Sciatic nerve (tissue), 2 donors: ENCODE measurements at regions of chr2 and their contacts with region 1.

Region 1: GRCh38 chr2:175871331-175872004 is 130.6 kb downstream of the LNPK start:
- DNase-seq: no peak
- ATAC-seq: no peak

Region 2: GRCh38 chr2:175734679-175735078 is 136.8 kb before region 1 on chr2:
- intact Hi-C with region 1: no loop called
- DNase-seq: no peak
- ATAC-seq: no peak

Region 3: DNA sequence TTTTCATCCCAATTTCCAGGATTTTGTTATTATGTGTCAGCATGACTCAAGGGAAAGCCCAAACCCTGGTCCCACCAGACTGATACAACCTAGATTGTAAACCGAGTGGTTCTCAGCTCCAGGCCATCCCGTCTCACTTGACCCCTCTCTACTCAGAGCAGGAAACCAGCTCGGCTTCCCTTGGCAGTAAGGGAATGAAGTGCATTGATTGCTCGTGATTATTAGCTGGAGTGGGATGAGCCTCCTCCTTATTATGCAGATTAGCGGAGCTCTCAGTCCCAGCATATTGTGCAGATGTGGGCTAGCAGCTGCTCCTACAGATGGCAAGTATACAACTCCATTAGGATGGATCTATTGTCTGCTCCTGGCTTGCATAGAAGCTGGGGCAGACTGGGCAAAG is 37.0 kb before region 1 on chr2:
- intact Hi-C with region 1: loop called (anchors 1 kb)
- DNase-seq: no peak
- ATAC-seq: no peak

Region 4: DNA sequence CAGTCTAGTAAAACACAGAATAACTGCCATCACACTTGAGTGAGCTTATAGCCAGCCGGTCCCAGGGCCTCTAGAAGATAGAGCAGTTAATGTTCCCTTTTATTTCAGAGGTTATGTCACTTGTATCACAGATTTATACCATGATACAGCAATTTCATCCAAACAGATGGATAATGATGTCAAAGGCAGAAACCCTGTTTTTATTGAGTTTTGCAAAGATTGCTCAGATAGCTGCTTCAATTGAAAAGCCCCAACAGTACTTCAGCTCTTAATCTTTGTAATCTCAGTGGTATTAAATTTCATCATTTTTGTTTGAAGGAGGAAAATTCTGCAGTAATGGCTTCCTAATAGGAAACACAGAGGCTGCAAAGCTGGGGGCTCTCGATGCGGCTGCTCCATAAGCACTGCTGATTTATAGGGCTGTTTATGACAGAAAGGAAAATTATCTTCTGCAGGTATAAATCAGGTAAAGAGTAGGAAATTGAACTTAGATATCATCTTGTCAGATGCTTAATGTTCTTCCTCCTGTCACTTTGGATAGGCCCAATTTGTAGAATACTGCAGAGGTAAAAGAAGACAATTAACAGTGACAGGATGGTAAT is 18.3 kb after region 1 on chr2:
- intact Hi-C with region 1: no loop called
- DNase-seq: no peak
- ATAC-seq: no peak